Activated B cell treated with CpG ODN at 0.5 μM for 24 hours (primary cell): ENCODE measurements at regions of chr11 and their contacts with region 1.

Region 1: GRCh38 chr11:57800444-57801182 is 39.0 kb downstream of the CTNND1 start:
- DNase-seq: no peak
- ATAC-seq: peak; percentile 87
- H3K4me3 Mint-ChIP-seq: no peak overlapping the region
- H3K27ac Mint-ChIP-seq: peak overlapping the region; percentile 84
- H3K4me1 Mint-ChIP-seq: peaks cover 34% of the 10 kb centered on the region
- H3K27me3 Mint-ChIP-seq: no peaks in the 10 kb centered on the region
- CTCF ChIP-seq: peak; percentile 57

Region 2: GRCh38 chr11:57345555-57346211 is 454.9 kb before region 1 on chr11:
- CTCF ChIA-PET with region 1: interaction called, 11 read pairs
- POLR2A ChIA-PET with region 1: interaction called, 3 read pairs
- intact Hi-C with region 1: loop called (anchors 1 kb)
- DNase-seq: peak; percentile 40
- ATAC-seq: peak; percentile 91
- H3K4me3 Mint-ChIP-seq: no peak overlapping the region
- H3K27ac Mint-ChIP-seq: no peak overlapping the region
- H3K4me1 Mint-ChIP-seq: peaks cover 3% of the 10 kb centered on the region
- H3K27me3 Mint-ChIP-seq: peaks cover 3% of the 10 kb centered on the region
- CTCF ChIP-seq: no peak

Region 3: DNA sequence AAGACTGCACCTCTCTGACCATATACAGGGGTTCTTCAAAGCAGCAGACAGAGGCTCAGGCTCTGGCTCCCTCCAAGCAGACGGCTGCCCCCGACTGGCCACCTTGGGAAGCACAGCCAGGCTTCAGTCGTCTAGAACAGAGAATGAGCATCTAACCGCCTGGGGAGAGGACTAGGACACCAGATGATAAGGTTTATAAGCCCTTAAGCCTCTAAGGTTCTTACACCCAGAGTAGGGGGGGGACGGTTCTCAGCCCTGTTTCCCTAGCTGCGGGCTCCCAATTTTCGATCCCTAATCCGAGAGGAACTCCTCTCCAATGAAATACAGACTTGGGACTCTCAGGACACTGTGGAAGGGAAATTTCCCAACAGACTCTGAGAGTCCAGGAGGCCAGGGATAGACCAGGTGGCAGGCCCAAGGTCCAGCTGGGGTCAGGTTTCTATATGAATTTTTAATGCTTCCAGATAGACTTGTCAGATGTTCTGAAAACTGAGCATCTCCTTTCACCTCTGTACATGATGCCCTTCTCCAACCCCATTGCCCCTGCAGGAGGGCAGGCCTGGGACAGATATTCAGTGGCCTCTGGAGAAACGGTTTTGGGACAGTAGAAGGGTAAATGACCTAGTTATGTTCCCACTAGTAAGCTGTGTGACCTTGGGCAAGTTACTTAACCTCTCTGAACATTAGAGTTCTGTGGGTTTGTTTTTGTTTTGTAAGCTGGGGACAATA is 320.0 kb before region 1 on chr11:
- CTCF ChIA-PET with region 1: interaction called, 4 read pairs
- POLR2A ChIA-PET with region 1: no interaction called
- intact Hi-C with region 1: loop called (anchors 5 kb)
- DNase-seq: peak; percentile 47
- ATAC-seq: peak; percentile 29
- H3K4me3 Mint-ChIP-seq: no peak overlapping the region
- H3K27ac Mint-ChIP-seq: no peak overlapping the region
- H3K4me1 Mint-ChIP-seq: peaks cover 59% of the 10 kb centered on the region
- H3K27me3 Mint-ChIP-seq: peaks cover 7% of the 10 kb centered on the region
- CTCF ChIP-seq: no peak

Region 4: DNA sequence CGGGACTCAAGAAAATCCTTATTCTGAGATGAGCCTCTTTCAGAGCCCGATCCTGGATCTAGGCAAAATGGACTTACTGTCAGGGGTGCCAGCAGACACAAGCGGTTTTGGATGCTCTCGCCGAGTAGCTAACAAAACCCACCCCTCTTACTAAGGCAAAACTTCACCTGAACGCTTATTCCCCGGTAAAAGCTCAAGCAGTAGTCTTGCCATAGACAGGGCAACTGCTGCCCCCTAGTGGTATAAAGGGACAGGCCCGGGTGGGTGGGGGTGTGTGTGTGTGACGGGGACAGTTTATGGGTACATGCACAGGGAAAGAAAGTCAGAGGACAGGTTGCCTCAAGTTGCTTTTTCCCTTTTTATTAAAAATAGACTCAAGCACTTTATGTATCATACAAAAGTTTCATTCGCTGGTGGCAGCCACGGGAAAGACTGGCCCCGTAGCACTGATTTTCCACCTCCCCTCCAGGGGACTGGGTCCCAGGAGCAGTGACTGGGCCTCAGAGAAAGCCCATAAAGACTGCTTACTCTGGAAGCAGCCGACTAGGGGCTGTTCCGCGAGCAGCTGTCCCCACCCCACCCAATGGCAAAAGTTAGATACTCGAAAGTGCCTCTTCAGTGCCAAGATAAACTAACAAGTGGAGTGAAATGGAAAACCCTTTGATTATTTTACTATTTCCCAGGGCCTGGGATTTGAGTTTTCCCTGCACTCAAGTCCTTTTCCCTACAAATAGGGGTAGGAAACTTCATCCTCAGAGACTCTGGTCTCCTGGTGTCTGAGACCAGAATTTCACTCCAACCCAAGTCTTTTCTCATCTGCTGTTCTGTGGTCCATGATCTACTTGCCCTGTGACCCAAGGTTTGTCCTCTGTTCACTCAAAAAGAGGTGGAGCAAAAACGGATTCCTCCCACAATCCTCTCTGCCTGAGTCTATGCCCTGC is 155.6 kb before region 1 on chr11:
- CTCF ChIA-PET with region 1: interaction called, 7 read pairs
- POLR2A ChIA-PET with region 1: interaction called, 3 read pairs
- intact Hi-C with region 1: loop called (anchors 2 kb)
- DNase-seq: peak; percentile 65
- ATAC-seq: peak; percentile 82
- H3K4me3 Mint-ChIP-seq: no peak overlapping the region
- H3K27ac Mint-ChIP-seq: no peak overlapping the region
- H3K4me1 Mint-ChIP-seq: peaks cover 40% of the 10 kb centered on the region
- H3K27me3 Mint-ChIP-seq: peaks cover 58% of the 10 kb centered on the region
- CTCF ChIP-seq: no peak

Region 5: DNA sequence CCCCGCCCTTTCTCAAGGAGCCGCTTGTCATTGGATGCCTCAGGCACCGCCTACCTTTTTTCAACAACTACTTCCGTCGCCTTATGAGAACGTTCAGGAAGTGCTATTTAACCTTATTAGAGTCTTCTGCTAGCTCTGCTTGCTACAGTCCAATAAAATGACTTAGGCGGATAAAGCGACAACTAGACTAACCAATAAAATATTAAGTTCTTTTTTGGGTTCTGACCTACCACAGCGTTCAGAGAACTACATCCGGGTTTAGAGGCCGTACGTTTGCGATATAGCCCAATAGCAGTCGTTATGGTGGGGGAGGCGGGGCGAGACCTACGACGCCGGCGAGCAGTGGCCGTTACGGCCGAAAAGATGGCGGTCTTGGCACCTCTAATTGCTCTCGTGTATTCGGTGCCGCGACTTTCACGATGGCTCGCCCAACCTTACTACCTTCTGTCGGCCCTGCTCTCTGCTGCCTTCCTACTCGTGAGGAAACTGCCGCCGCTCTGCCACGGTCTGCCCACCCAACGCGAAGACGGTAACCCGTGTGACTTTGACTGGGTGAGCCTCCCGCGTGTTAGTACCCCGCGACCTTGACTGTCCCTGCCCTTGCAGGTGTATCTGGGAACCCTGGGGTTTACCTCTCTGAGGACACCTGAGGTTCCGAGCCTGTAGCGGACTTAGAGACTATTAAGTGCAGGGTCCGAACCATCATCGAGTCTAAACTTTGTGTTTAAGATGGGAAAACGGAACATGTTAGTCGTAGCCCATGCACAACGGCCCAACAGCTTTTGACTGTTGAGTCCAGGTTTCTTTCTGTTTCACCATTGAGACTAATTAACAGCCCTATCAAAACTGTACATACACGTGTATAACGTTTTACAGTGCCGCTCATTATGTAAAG is 88.1 kb before region 1 on chr11 and contains the start of gene TMX2:
- CTCF ChIA-PET with region 1: interaction called, 26 read pairs
- POLR2A ChIA-PET with region 1: interaction called, 20 read pairs
- intact Hi-C with region 1: loop called (anchors 1 kb)
- DNase-seq: peak; percentile 75
- ATAC-seq: peak; percentile 87
- H3K4me3 Mint-ChIP-seq: peak within 1 kb of the TSS; percentile 98
- H3K27ac Mint-ChIP-seq: peak within 1 kb of the TSS; percentile 96
- H3K4me1 Mint-ChIP-seq: peaks cover 47% of the 10 kb centered on the region
- H3K27me3 Mint-ChIP-seq: no peaks in the 10 kb centered on the region
- CTCF ChIP-seq: no peak
- total RNA-seq, gene TMX2: 53.2 and 53.3 TPM in 2 replicates

Region 6: DNA sequence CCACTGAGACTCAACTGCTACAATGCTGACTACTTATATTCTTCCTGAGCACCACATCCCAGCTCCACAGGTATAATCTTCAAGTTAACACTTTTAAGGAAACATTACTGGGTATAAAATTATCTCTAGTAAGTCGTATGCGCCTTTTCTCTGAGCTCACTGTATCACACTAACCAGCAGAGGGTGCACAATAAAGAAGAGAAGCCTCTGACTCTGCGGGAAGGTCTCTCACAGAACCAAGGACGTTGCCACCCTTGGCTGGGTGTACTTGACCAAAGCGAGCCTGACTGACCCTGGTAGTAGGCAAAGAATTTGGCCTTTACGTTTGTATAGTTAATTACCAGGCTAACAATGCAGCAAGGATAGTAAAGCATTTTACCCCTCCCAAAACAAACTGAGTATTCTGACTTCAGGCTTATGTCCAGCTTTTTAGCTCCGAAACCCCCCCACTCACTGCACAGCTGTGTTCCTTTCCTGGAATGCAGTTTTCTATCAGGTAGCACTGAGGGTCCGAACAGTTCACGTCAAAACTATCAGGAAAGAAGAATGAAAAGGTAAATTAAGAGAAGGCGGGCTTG is 48.8 kb before region 1 on chr11 and contains the start of gene BTBD18:
- CTCF ChIA-PET with region 1: interaction called, 133 read pairs
- POLR2A ChIA-PET with region 1: interaction called, 15 read pairs
- intact Hi-C with region 1: loop called (anchors 1 kb)
- DNase-seq: no peak
- ATAC-seq: peak; percentile 66
- H3K4me3 Mint-ChIP-seq: no peak within 1 kb of the TSS
- H3K27ac Mint-ChIP-seq: peak within 1 kb of the TSS; percentile 66
- H3K4me1 Mint-ChIP-seq: peaks cover 9% of the 10 kb centered on the region
- H3K27me3 Mint-ChIP-seq: no peaks in the 10 kb centered on the region
- CTCF ChIP-seq: no peak
- total RNA-seq, gene BTBD18: not detected in 2 replicates

Region 7: DNA sequence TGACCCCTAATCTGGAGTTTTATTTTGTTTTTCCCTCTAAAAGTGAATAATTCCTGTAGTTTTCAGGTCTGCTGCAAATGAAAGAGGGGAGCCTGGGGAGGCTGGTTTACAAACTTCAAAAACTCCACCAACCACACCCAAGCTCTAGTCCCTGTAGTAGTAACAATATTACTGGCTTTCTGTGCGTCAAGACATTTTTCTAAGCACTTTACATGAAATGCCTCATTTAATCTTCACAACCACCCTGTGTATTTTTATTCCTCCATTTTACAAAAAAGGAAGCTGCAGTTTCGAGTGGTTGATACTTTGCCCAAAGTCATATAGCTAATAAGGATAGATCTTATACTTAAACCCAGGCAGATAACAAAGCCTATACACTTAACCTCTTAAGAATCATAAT is 15.5 kb before region 1 on chr11:
- CTCF ChIA-PET with region 1: interaction called, 28 read pairs
- POLR2A ChIA-PET with region 1: interaction called, 16 read pairs
- intact Hi-C with region 1: loop called (anchors 1 kb)
- DNase-seq: no peak
- ATAC-seq: peak; percentile 87
- H3K4me3 Mint-ChIP-seq: peak overlapping the region; percentile 75
- H3K27ac Mint-ChIP-seq: peak overlapping the region; percentile 92
- H3K4me1 Mint-ChIP-seq: peaks cover 67% of the 10 kb centered on the region
- H3K27me3 Mint-ChIP-seq: no peaks in the 10 kb centered on the region
- CTCF ChIP-seq: no peak